Activated B cell treated with CpG ODN at 0.5 μM for 24 hours (primary cell): ENCODE measurements at regions of chr4 and their contacts with region 1.

Region 1: GRCh38 chr4:81069706-81070331 is 39.3 kb downstream of the BMP3 start:
- DNase-seq: no peak
- ATAC-seq: peak; percentile 87
- H3K4me3 Mint-ChIP-seq: no peak overlapping the region
- H3K27ac Mint-ChIP-seq: no peak overlapping the region
- H3K4me1 Mint-ChIP-seq: no peaks in the 10 kb centered on the region
- H3K27me3 Mint-ChIP-seq: peaks cover 5% of the 10 kb centered on the region
- CTCF ChIP-seq: peak; percentile 75

Region 2: GRCh38 chr4:81058621-81059020 is 11.2 kb before region 1 on chr4:
- CTCF ChIA-PET with region 1: interaction called, 10 read pairs
- POLR2A ChIA-PET with region 1: no interaction called
- intact Hi-C with region 1: no loop called
- DNase-seq: no peak
- ATAC-seq: no peak
- H3K4me3 Mint-ChIP-seq: no peak overlapping the region
- H3K27ac Mint-ChIP-seq: no peak overlapping the region
- H3K4me1 Mint-ChIP-seq: peaks cover 5% of the 10 kb centered on the region
- H3K27me3 Mint-ChIP-seq: peaks cover 1% of the 10 kb centered on the region
- CTCF ChIP-seq: no peak

Region 3: GRCh38 chr4:81084029-81084428 is 14.2 kb after region 1 on chr4:
- CTCF ChIA-PET with region 1: interaction called, 10 read pairs
- POLR2A ChIA-PET with region 1: no interaction called
- intact Hi-C with region 1: no loop called
- DNase-seq: no peak
- ATAC-seq: no peak
- H3K4me3 Mint-ChIP-seq: no peak overlapping the region
- H3K27ac Mint-ChIP-seq: no peak overlapping the region
- H3K4me1 Mint-ChIP-seq: no peaks in the 10 kb centered on the region
- H3K27me3 Mint-ChIP-seq: no peaks in the 10 kb centered on the region
- CTCF ChIP-seq: no peak

Region 4: GRCh38 chr4:81260443-81261101 is 190.8 kb after region 1 on chr4:
- CTCF ChIA-PET with region 1: no interaction called
- POLR2A ChIA-PET with region 1: no interaction called
- intact Hi-C with region 1: loop called (anchors 5 kb)
- DNase-seq: no peak
- ATAC-seq: no peak
- H3K4me3 Mint-ChIP-seq: no peak overlapping the region
- H3K27ac Mint-ChIP-seq: no peak overlapping the region
- H3K4me1 Mint-ChIP-seq: no peaks in the 10 kb centered on the region
- H3K27me3 Mint-ChIP-seq: no peaks in the 10 kb centered on the region
- CTCF ChIP-seq: no peak

Region 5: GRCh38 chr4:81314196-81314896 is 244.5 kb after region 1 on chr4:
- CTCF ChIA-PET with region 1: no interaction called
- POLR2A ChIA-PET with region 1: no interaction called
- intact Hi-C with region 1: no loop called
- DNase-seq: no peak
- ATAC-seq: no peak
- H3K4me3 Mint-ChIP-seq: no peak overlapping the region
- H3K27ac Mint-ChIP-seq: no peak overlapping the region
- H3K4me1 Mint-ChIP-seq: peaks cover 10% of the 10 kb centered on the region
- H3K27me3 Mint-ChIP-seq: no peaks in the 10 kb centered on the region
- CTCF ChIP-seq: no peak

Region 6: GRCh38 chr4:81351654-81352445 is 282.0 kb after region 1 on chr4:
- CTCF ChIA-PET with region 1: interaction called, 33 read pairs
- POLR2A ChIA-PET with region 1: no interaction called
- intact Hi-C with region 1: loop called (anchors 1 kb)
- DNase-seq: no peak
- ATAC-seq: no peak
- H3K4me3 Mint-ChIP-seq: no peak overlapping the region
- H3K27ac Mint-ChIP-seq: no peak overlapping the region
- H3K4me1 Mint-ChIP-seq: no peaks in the 10 kb centered on the region
- H3K27me3 Mint-ChIP-seq: peaks cover 11% of the 10 kb centered on the region
- CTCF ChIP-seq: peak; percentile 79

Region 7: DNA sequence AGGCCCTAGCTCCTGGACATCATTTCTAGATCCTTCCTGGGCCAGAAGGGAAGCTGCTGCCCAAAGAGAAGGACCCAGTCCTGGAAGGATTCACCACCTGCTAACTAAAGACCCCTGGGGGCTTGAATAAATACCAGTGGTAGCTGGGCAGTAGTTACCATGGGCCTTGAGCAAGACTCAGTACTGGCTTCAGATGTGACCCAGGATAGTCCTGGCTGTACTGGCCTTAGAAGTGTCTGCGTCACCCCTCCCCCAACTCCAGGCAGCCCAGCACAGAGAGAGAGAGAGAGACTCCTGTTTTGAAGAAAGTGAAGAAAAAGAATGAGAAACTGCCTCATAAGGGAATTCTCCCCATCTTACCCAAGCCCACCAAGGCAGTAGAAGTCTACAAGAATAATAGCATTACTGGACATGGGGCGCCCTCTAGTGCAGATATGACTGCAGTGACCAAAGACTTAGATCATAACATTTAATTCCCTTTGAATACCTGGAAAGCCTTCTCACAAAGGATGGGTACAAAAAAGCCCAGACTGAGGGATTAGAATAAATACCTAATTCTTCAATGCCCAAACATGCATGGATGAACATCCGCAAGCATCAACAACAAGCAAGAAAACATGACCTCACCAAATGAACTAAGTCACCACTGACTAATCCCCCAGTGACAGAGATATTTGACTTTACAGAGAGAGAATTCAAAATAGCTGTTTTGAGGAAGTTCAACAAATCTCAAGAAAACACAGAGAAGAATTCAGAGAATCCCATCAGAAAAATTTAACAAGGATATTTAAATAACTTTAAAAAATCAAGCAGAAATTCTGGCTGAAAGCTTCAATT is 1132.2 kb after region 1 on chr4:
- CTCF ChIA-PET with region 1: interaction called, 4 read pairs
- POLR2A ChIA-PET with region 1: no interaction called
- intact Hi-C with region 1: loop called (anchors 2 kb)
- DNase-seq: no peak
- ATAC-seq: peak; percentile 50
- H3K4me3 Mint-ChIP-seq: no peak overlapping the region
- H3K27ac Mint-ChIP-seq: no peak overlapping the region
- H3K4me1 Mint-ChIP-seq: no peaks in the 10 kb centered on the region
- H3K27me3 Mint-ChIP-seq: peaks cover 16% of the 10 kb centered on the region
- CTCF ChIP-seq: no peak